A549 (cell line): ENCODE measurements at regions of chr10 and their contacts with region 1.

Region 1: DNA sequence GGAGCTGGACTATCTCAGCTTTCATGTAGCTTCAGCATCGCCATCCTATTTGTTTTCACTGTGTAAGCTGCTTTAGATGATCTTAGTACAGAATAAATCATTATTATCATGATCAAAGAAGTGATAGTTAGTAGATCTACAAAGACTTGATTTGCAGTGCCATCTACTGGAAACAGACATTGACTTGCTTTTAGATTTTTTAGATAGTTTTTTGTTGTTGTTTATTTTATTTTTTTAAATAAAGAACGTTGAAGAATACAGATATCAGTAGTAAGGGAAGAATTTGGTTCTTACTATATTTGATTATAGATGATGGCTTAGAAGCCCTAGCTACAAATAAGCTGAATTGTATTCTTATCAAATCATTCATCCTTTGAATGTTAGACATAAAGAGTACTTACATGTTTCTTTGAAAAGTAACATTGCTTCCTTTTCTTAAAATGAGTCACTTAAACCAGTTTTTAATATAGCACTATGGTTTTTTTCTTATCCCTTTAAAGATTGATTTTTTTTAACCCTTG is 6.3 kb upstream of the SFMBT2 start:
- DNase-seq: peak in 1 of 2 experiments; percentile 59
- ATAC-seq: peak in 1 of 2 experiments; percentile 58; a peak in 3 of 6 replicates
- H3K4me3 ChIP-seq: no peak overlapping the region
- H3K27ac ChIP-seq: peak overlapping the region in 1 of 2 experiments; percentile 11; a peak in 1 of 6 replicates
- H3K4me1 ChIP-seq: peaks cover 16% of the 10 kb centered on the region; the same call in 2 of the 3 replicates
- CTCF ChIP-seq: peak; percentile 81
- EP300 ChIP-seq: no peak
- POLR2A ChIP-seq: no peak
- RAD21 ChIP-seq: peak; percentile 89 to 93

Region 2: DNA sequence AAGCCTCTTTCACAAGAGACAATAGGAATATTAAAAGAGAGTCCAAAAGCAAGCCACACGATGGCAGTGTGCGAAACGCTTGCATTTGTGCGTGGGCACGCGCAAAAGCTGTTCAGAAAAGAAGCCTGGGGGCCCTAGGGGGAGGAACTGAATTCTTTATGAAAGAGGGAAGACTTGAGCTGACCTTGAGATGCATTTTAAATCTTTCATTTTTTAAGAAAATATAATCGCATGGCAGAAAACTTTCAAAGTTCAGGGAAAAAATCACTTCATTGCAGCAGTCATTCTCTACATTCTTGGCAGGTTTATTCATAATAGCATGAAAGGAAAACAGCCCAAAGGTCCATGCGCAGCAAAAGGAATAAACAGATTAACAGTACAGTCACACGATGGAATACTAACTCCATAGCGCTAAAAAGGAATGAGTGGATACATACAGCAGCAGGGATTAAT is 630.6 kb before region 1 on chr10:
- CTCF ChIA-PET with region 1: interaction called, 20 read pairs
- POLR2A ChIA-PET with region 1: no interaction called
- DNase-seq: peak; percentile 46 to 54
- ATAC-seq: peak; percentile 73 to 80; a peak in 5 of 6 replicates
- H3K4me3 ChIP-seq: no peak overlapping the region; the same call in 2 of the 3 replicates
- H3K27ac ChIP-seq: peak overlapping the region; percentile 8 to 72; a peak in 3 of 6 replicates
- H3K4me1 ChIP-seq: peaks cover 30% of the 10 kb centered on the region
- CTCF ChIP-seq: peak; percentile 83
- EP300 ChIP-seq: no peak
- POLR2A ChIP-seq: no peak
- RAD21 ChIP-seq: peak; percentile 72 to 82

Region 3: DNA sequence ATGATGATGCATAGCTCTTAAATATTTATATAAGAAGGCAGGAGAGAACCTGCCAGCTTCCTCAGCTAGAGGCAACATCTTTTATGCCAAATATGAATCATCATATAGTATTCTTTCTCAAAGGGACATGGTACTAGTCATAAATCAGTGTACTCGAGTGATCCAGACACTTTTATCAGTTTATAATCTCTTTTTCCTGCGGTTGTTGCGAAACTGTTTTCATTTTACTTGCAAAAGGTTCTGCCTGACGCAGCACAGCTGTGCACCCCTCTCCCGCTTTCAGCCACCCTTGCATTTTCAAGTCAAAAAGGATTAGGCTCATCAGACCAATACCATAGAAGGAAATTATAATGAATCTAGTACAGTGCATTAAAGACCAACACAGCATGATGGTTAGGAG is 504.7 kb before region 1 on chr10:
- CTCF ChIA-PET with region 1: interaction called, 18 read pairs
- POLR2A ChIA-PET with region 1: no interaction called
- DNase-seq: peak in 1 of 2 experiments; percentile 48
- ATAC-seq: peak; percentile 74 to 75; a peak in 5 of 6 replicates
- H3K4me3 ChIP-seq: no peak overlapping the region
- H3K27ac ChIP-seq: peak overlapping the region in 1 of 2 experiments; percentile 31; a peak in 1 of 6 replicates
- H3K4me1 ChIP-seq: peaks cover 13% of the 10 kb centered on the region; the same call in 2 of the 3 replicates
- CTCF ChIP-seq: no peak
- EP300 ChIP-seq: peak; percentile 40 to 67; a peak in 3 of 5 replicates
- POLR2A ChIP-seq: no peak
- RAD21 ChIP-seq: no peak

Region 4: DNA sequence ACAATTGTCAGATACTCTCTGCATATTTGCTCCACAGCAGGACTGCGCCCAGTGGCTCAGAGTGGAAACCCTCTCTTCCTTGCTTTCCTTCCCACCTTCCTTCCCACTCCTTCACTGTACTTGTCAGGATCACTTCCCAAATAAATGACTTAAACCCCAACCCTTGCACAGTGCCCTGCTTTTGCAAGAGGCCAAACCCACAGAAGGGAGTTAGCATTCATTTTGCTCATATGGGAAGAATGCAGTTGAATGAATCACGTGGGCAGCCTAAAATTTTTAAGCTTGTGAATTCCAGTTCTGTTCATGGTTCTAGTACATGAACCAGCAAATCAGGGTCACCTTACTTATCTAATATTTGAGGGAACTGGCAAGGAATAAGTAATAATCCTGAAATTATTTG is 41.4 kb after region 1 on chr10:
- CTCF ChIA-PET with region 1: no interaction called
- POLR2A ChIA-PET with region 1: no interaction called
- DNase-seq: no peak
- ATAC-seq: no peak
- H3K4me3 ChIP-seq: no peak overlapping the region
- H3K27ac ChIP-seq: no peak overlapping the region
- H3K4me1 ChIP-seq: no peaks in the 10 kb centered on the region
- CTCF ChIP-seq: no peak
- EP300 ChIP-seq: no peak
- POLR2A ChIP-seq: no peak
- RAD21 ChIP-seq: no peak